Activated CD4-positive, alpha-beta memory T cell treated with anti-CD3 and anti-CD28 coated beads for 36 hours (primary cell): ENCODE measurements at regions of chr17 and their contacts with region 1.

Region 1: DNA sequence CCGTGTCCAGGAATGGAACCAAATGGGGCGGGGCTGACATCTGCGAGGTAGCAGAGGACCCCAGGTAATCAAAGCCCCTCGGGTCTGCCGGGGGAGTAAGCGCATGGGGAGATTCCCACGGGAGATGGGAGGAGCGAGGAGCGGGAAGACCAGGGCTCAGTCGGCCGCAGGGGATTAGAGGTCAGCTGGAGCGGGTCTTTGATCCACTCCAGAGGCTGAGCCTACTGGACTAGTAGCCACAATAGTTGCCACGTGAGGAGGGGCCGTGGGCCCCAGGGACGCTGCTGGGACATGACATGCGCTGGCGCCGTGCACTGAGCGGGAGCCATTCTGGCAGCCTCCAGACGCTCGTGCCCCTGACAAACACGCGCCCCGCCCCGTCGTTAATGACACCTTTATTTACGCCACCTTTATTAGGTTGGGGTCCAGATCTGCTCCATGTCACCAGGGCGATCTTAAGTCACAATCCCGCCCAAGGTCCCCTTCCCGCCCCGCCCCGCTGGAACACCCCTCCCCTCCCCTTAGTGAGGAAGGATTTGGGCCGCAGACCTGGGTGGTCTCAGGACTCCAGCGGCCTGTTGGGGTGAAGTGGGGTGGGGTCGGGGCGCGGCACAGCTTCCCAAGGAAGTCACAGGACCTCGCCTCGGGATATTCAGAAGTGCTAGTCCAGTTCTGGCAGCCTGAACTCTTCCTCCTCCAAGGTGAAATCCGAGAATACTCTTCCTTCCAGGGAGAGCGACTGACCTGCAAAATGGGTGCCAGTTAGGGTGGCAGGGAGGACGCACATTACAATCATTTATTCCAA is 15.0 kb downstream of the PPY start:
- DNase-seq: no peak
- H3K4me3 Mint-ChIP-seq: peak overlapping the region; percentile 68
- H3K27ac Mint-ChIP-seq: no peak overlapping the region
- H3K4me1 Mint-ChIP-seq: peaks cover 28% of the 10 kb centered on the region
- H3K27me3 Mint-ChIP-seq: peaks cover 7% of the 10 kb centered on the region

Region 2: DNA sequence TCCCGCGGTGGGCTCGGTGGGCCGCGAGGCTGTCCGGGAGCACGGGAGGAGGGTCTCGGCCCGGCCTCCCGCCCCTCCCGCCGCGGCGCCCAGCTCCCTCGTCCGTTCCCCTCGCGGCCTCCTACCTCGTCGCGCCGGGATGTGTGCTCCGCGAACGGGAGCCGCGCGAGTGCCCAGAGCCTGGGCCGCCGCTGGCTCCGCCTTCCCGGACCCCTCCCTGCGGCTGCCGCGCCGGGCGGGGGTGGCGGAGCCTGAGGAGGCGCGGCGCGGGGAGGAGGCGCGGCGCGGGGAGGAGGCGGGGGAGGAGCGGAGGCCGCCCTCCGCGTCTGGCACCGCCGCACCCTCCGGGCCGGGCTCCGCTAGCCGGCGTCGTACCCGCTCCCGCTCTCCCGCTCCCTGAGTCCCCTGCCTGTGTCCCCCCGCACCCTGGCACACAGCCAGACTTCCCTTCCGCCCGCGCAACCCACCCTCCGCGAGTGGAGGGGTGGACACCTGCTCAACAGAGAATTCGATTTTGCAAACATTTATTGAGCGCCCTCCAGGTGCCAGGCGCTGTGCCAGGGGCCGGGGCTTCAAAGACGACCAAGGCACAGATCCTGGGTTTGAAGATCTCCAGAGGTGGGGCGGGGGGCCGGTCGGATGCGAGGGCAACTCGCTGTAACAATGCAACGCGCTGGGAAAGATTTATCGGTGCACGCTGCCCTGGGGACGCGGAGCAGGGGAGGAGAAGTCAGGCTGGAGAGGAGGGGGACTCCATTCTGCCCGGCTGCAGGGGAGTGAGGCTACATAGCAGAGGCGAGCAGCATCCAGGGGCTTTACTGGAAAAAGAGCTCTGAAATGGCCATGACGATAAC is 94.1 kb before region 1 on chr17 and contains the start of gene MPP3:
- CTCF ChIA-PET with region 1: no interaction called
- POLR2A ChIA-PET with region 1: no interaction called
- intact Hi-C with region 1: no loop called
- DNase-seq: peak; percentile 41
- H3K4me3 Mint-ChIP-seq: peak within 1 kb of the TSS; percentile 70
- H3K27ac Mint-ChIP-seq: no peak within 1 kb of the TSS
- H3K4me1 Mint-ChIP-seq: peaks cover 22% of the 10 kb centered on the region
- H3K27me3 Mint-ChIP-seq: peaks cover 23% of the 10 kb centered on the region
- total RNA-seq, gene MPP3: 0.41 to 0.62 TPM

Region 3: DNA sequence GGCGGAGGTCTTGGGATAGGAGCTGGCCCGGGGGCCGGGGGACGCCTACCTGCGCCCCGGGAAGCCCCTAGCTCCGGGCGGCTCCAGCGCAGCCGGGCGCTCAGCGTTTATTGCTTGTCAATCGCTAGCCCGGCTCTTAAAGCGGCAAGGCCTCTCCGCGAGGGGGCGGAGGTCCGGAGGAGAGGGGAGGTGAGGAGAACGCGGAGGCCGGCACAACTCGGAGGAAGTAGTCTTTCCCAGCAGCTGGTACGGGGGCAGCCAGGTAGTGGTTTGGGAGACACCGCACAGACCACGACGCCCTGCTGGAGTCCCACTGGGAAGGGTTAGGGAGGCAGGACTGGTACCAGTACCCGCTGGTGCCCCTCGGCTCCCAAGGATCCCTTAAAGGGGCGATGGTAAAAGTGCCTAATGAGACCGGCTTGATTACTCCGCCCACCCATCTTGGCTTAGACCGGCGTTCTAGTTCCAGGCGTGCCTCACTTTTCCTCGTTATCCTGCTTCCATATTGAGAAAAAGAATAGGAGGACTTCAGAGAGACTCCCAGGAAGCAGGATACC is 19.8 kb before region 1 on chr17 and contains the start of gene MPP2:
- CTCF ChIA-PET with region 1: interaction called, 33 read pairs
- POLR2A ChIA-PET with region 1: no interaction called
- intact Hi-C with region 1: no loop called
- DNase-seq: peak; percentile 71
- H3K4me3 Mint-ChIP-seq: peak within 1 kb of the TSS; percentile 67
- H3K27ac Mint-ChIP-seq: no peak within 1 kb of the TSS
- H3K4me1 Mint-ChIP-seq: peaks cover 17% of the 10 kb centered on the region
- H3K27me3 Mint-ChIP-seq: peaks cover 11% of the 10 kb centered on the region
- total RNA-seq, gene MPP2: 1.8 to 2.0 TPM

Region 4: GRCh38 chr17:44005527-44006271 is 78.4 kb after region 1 on chr17:
- CTCF ChIA-PET with region 1: no interaction called
- POLR2A ChIA-PET with region 1: no interaction called
- intact Hi-C with region 1: no loop called
- DNase-seq: peak; percentile 61
- H3K4me3 Mint-ChIP-seq: peak overlapping the region; percentile 86
- H3K27ac Mint-ChIP-seq: no peak overlapping the region
- H3K4me1 Mint-ChIP-seq: peaks cover 24% of the 10 kb centered on the region
- H3K27me3 Mint-ChIP-seq: peaks cover 6% of the 10 kb centered on the region